ENCODE measurements at regions of chr5 and their contacts with region 1.

Region 1: GRCh38 chr5:77491783-77492652 is at the start of gene WDR41:
- DNase-seq: peak; percentile 97
- ATAC-seq: peak; percentile 96
- H3K4me3 ChIP-seq: peak within 1 kb of the TSS; percentile 88
- H3K27ac ChIP-seq: peak within 1 kb of the TSS; percentile 79
- H3K4me1 ChIP-seq: peaks cover 2% of the 10 kb centered on the region
- H3K27me3 ChIP-seq: no peaks in the 10 kb centered on the region; the same call in 1 of the 2 replicates
- CTCF ChIP-seq: peak; percentile 92
- POLR2A ChIP-seq: peak; percentile 73
- RAD21 ChIP-seq: peak; percentile 83
- total RNA-seq, gene WDR41: 72.1 and 104 TPM in 2 replicates

Region 2: GRCh38 chr5:76867827-76868693 is 624.0 kb before region 1 on chr5:
- CTCF ChIA-PET with region 1: interaction called, 3 read pairs
- POLR2A ChIA-PET with region 1: no interaction called
- dilution Hi-C with region 1: no loop called
- in situ Hi-C with region 1: no loop called
- intact Hi-C with region 1: loop called (anchors 1 kb)
- DNase-seq: peak; percentile 73
- ATAC-seq: peak; percentile 88
- H3K4me3 ChIP-seq: no peak overlapping the region
- H3K27ac ChIP-seq: no peak overlapping the region
- H3K4me1 ChIP-seq: peaks cover 2% of the 10 kb centered on the region; the same call in 1 of the 2 replicates
- H3K27me3 ChIP-seq: no peaks in the 10 kb centered on the region
- CTCF ChIP-seq: peak; percentile 89
- POLR2A ChIP-seq: no peak
- RAD21 ChIP-seq: peak; percentile 88

Region 3: DNA sequence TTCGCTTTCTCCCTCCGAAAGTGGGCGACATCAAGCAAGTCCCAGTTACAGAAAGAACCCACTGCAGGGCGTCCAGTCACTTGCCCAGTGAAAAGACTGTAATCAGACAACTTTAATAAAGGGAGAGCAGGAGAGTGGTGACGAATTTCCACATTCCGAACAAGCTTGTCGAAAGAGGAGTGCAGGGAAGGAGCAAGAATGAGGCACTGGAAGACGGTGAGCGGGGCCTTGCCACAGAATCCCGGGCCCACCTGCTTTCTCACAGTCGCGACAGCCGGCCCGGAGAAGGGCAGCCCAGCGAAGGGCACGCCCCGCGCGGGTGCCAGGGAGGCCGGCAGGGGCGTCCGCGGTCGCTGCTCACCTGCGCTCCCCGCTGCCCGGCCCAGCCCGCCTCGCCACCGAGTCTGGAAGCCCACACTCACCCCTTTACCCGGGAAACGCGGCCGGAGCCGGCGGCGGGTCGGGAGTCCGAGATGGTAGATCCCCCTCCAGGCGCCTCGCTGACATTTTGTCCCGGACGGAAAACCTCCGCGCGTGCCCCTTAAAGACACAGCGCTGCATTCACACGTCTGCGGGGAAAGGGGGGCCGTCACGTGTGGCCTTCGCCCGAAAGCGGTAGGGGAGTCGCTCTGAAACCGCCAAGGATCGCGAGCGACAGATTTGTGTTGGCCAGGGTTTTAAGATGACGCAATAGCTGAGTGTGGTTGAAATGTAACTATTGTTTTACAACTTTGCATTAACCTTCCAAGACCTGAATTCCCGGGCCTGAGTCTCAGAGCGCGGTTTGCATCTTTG is 405.1 kb before region 1 on chr5 and contains the start of gene ZBED3:
- CTCF ChIA-PET with region 1: interaction called, 4 read pairs
- POLR2A ChIA-PET with region 1: no interaction called
- dilution Hi-C with region 1: no loop called
- in situ Hi-C with region 1: no loop called
- intact Hi-C with region 1: loop called (anchors 5 kb)
- DNase-seq: peak; percentile 74
- ATAC-seq: peak; percentile 81
- H3K4me3 ChIP-seq: peak within 1 kb of the TSS; percentile 60
- H3K27ac ChIP-seq: peak within 1 kb of the TSS; percentile 72
- H3K4me1 ChIP-seq: peaks cover 6% of the 10 kb centered on the region; the same call in 1 of the 2 replicates
- H3K27me3 ChIP-seq: no peaks in the 10 kb centered on the region
- CTCF ChIP-seq: no peak
- POLR2A ChIP-seq: no peak
- RAD21 ChIP-seq: no peak
- total RNA-seq, gene ZBED3: 0.18 and 0.28 TPM in 2 replicates

Region 4: GRCh38 chr5:77230721-77231470 is 261.1 kb before region 1 on chr5:
- CTCF ChIA-PET with region 1: no interaction called
- POLR2A ChIA-PET with region 1: no interaction called
- dilution Hi-C with region 1: no loop called
- in situ Hi-C with region 1: no loop called
- intact Hi-C with region 1: loop called (anchors 5 kb)
- DNase-seq: peak; percentile 28
- ATAC-seq: no peak
- H3K4me3 ChIP-seq: no peak overlapping the region
- H3K27ac ChIP-seq: no peak overlapping the region
- H3K4me1 ChIP-seq: no peaks in the 10 kb centered on the region
- H3K27me3 ChIP-seq: peaks cover 24% of the 10 kb centered on the region
- CTCF ChIP-seq: 0 out of 2 replicates have a peak, but pooled peaks have one; percentile 10
- POLR2A ChIP-seq: no peak
- RAD21 ChIP-seq: no peak

Region 5: GRCh38 chr5:77426670-77427069 is 65.3 kb before region 1 on chr5:
- CTCF ChIA-PET with region 1: interaction called, 3 read pairs
- POLR2A ChIA-PET with region 1: no interaction called
- dilution Hi-C with region 1: no loop called
- in situ Hi-C with region 1: no loop called
- intact Hi-C with region 1: loop called (anchors 5 kb)
- DNase-seq: peak; percentile 80
- ATAC-seq: peak; percentile 56
- H3K4me3 ChIP-seq: no peak overlapping the region
- H3K27ac ChIP-seq: no peak overlapping the region; the same call in 1 of the 2 replicates
- H3K4me1 ChIP-seq: peaks cover 19% of the 10 kb centered on the region
- H3K27me3 ChIP-seq: no peaks in the 10 kb centered on the region
- CTCF ChIP-seq: no peak
- POLR2A ChIP-seq: no peak
- RAD21 ChIP-seq: no peak